BJ (cell line): ENCODE measurements at regions of chrX and their contacts with region 1.

Region 1: GRCh38 chrX:13506574-13506973 is 62.8 kb upstream of the EGFL6 start:
- DNase-seq: no peak
- H3K4me3 ChIP-seq: no peak overlapping the region
- H3K27me3 ChIP-seq: no peaks in the 10 kb centered on the region
- CTCF ChIP-seq: peak; percentile 57

Region 2: DNA sequence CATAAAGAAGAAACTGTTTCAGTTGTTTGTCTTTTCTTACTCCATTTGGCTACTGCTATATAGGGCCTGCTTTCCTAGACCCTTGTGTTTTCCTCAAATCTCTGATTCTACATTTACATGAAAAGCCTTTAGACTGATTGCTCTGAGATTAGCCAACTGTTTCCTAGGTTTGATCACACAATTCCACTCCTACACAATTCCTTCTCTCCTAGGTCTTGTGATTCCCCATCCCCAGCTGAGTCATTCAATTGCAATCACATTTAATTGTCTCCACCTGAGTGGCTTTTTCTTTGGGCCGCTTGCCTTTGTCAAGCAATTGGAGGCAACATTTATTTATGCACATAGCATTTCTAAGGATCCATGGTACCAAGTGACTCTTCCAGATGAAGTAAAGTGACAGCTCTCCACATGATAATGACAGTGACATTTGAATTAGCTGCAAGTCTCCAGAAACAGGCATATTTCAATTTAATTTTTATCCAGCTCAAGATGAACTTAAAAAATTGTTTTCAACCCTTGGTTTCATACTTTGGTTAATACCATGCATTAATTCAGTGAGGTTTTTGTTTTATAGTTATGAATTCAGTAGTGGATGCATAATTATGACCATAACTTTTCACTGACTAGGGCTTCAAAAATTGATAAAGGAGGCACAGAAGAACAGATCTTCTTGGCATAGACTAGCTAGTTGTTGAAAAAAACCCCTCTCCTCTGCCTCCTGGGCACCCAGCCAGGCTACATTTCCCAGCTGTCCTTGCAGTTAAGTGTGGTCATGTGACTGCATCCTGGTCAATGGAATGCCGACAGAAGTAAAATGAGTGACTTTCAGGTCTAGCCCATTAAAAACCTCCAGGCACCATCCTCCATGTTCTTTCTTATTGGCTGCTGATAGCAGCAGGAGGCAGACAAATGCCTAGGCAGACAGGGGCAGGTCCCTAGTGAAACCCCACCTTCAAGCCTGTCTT is 222.3 kb before region 1 on chrX:
- CTCF ChIA-PET with region 1: no interaction called
- POLR2A ChIA-PET with region 1: no interaction called
- DNase-seq: peak; percentile 55
- H3K4me3 ChIP-seq: no peak overlapping the region
- H3K27me3 ChIP-seq: no peaks in the 10 kb centered on the region
- CTCF ChIP-seq: no peak

Region 3: GRCh38 chrX:13646154-13646549 is 139.6 kb after region 1 on chrX:
- CTCF ChIA-PET with region 1: interaction called, 44 read pairs
- POLR2A ChIA-PET with region 1: no interaction called
- DNase-seq: no peak
- H3K4me3 ChIP-seq: no peak overlapping the region
- H3K27me3 ChIP-seq: no peaks in the 10 kb centered on the region
- CTCF ChIP-seq: peak; percentile 75

Region 4: DNA sequence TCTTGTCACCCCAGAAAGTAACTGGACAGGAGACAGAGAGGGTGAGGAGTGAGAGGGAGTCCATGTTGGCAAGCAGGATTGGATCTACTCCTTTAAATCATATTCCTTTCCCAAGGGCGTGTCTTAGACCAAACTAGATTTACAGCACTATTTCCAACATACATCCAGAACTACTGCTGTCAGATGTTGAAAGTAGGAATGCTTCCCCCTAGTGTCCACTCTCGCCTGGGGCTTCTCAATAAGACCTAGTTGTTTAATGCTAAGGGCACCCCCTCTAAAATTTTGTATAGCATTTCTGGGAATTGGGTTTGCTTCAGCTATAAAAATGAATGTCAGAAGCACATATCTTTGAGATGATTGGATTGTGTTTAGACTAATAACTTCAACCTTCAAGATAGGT is 241.3 kb after region 1 on chrX:
- CTCF ChIA-PET with region 1: interaction called, 11 read pairs
- POLR2A ChIA-PET with region 1: no interaction called
- DNase-seq: no peak
- H3K4me3 ChIP-seq: no peak overlapping the region
- H3K27me3 ChIP-seq: no peaks in the 10 kb centered on the region
- CTCF ChIP-seq: peak; percentile 56